ENCODE measurements at regions of chr15 and their contacts with region 1.

Region 1: DNA sequence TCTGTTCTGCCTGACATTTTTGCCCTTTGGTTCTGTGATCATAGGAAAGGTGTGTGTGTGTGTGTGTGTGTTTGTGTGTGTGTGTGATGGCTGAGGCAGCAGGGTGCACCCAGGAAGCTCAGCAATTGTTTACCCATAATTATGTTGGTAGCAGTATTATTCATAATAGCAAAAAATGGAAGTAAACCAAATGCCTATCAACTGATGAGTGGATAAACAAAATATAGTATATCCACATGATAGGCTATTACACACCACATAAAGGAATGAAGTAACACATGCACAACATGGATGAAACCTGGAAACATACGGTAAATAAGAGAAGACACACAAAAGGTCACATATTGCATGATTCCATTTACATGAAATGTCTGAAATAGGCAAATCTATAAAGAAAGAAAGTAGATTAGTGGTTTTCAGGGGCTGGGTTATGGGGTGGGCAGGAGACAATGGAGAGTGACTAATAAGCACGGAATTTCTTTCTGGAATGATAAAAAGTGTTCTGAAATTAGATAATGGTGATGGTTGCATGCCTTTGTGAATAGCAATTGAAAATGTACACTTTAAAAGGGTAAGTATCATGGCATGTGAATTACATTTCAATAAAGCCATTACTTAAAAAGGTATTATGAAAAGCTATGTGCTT is 167.2 kb downstream of the POLR2M start:
- DNase-seq: no peak
- H3K4me3 ChIP-seq: no peak overlapping the region
- H3K27ac ChIP-seq: no peak overlapping the region
- H3K4me1 ChIP-seq: no peaks in the 10 kb centered on the region
- CTCF ChIP-seq: no peak

Region 2: GRCh38 chr15:57421551-57421950 is 452.1 kb before region 1 on chr15:
- CTCF ChIA-PET with region 1: no interaction called
- POLR2A ChIA-PET with region 1: no interaction called
- intact Hi-C with region 1: no loop called
- DNase-seq: no peak
- H3K4me3 ChIP-seq: no peak overlapping the region
- H3K27ac ChIP-seq: no peak overlapping the region
- H3K4me1 ChIP-seq: no peaks in the 10 kb centered on the region
- CTCF ChIP-seq: no peak

Region 3: DNA sequence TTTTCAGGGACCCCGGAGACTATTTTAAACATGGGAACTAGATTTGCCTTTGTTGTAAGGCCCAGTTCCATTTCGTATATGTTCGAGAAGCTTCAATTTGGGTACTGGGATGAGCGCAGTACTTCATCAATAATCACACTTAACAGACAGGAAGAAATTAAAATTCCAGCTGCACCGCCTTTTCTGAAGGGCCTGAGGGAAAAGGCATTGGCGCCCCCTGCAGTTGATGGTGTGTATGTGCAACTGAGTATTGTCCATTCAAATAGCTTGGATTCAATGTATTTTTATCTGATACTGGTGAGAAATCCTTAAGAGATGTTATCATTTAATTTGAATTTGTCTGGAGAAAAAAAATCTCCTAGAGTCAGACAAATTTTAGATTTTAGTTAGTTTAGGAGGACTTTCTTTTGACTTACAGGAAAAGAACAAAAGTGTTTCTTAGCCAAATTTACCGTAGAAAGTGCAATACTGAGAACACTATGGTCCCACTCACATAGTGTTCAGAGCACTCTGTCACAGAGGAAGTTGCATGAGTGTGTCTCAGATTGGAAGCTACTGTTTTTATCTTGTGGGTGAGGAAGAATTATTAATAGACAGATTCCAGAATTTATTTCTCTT is 197.2 kb after region 1 on chr15:
- CTCF ChIA-PET with region 1: no interaction called
- POLR2A ChIA-PET with region 1: no interaction called
- intact Hi-C with region 1: loop called (anchors 10 kb)
- DNase-seq: peak; percentile 31
- H3K4me3 ChIP-seq: no peak overlapping the region
- H3K27ac ChIP-seq: no peak overlapping the region
- H3K4me1 ChIP-seq: no peaks in the 10 kb centered on the region
- CTCF ChIP-seq: peak; percentile 98